ENCODE measurements at regions of chr7 and their contacts with region 1.

Region 1: DNA sequence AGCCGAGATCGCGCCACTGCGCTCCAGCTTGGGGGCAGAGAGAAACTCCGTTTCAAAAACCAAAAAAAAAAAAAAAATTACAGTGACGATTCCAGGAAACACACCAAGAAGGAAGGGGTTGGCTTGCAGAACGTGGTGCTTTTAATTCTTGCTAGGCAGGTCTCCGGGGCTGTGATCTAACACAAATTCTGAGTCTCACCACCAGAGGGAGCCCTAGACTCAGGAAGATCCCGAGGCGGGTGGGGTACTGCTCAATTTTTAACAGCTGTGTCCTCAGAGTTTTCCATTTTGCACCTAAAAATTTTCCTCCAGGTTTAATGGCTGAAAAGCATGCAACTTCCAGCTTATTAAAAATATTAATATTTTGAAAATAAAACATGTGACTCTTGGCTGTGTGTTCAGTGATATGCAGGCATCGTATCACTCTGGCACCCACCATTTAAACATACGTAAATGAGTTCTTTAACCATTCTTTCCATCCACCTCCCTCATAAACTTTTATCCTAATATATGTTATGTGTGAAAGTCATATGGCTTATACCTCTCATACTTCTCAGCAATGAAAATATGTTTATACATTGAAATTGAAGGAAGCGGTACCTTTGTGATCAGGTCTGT is 26.5 kb upstream of the NUB1 start:
- DNase-seq: peak; percentile 31
- ATAC-seq: peak; percentile 96
- H3K4me3 ChIP-seq: no peak overlapping the region
- H3K27ac ChIP-seq: no peak overlapping the region
- H3K4me1 ChIP-seq: no peaks in the 10 kb centered on the region
- H3K27me3 ChIP-seq: no peaks in the 10 kb centered on the region
- CTCF ChIP-seq: peak; percentile 73 to 87 (median 74)
- EP300 ChIP-seq: no peak
- POLR2A ChIP-seq: no peak
- RAD21 ChIP-seq: peak; percentile 93

Region 2: GRCh38 chr7:151304856-151305255 is 10.3 kb before region 1 on chr7:
- CTCF ChIA-PET with region 1: interaction called, 16 read pairs
- POLR2A ChIA-PET with region 1: no interaction called
- RAD21 ChIA-PET with region 1: no interaction called
- SMC1A ChIA-PET with region 1: interaction called, 5 read pairs
- in situ Hi-C with region 1: no loop called
- intact Hi-C with region 1: no loop called
- DNase-seq: no peak
- ATAC-seq: no peak
- H3K4me3 ChIP-seq: no peak overlapping the region
- H3K27ac ChIP-seq: no peak overlapping the region
- H3K4me1 ChIP-seq: peaks cover 3% of the 10 kb centered on the region
- H3K27me3 ChIP-seq: peaks cover 0 to 3% of the 10 kb centered on the region in 2 experiments; a peak in 2 of 4 replicates
- CTCF ChIP-seq: no peak
- EP300 ChIP-seq: no peak
- POLR2A ChIP-seq: no peak
- RAD21 ChIP-seq: no peak

Region 3: GRCh38 chr7:151336027-151336708 is 21.0 kb after region 1 on chr7:
- CTCF ChIA-PET with region 1: interaction called, 69 read pairs
- POLR2A ChIA-PET with region 1: interaction called, 8 read pairs
- RAD21 ChIA-PET with region 1: interaction called, 10 read pairs
- SMC1A ChIA-PET with region 1: interaction called, 27 read pairs
- in situ Hi-C with region 1: no loop called
- intact Hi-C with region 1: no loop called
- DNase-seq: no peak
- ATAC-seq: no peak
- H3K4me3 ChIP-seq: no peak overlapping the region
- H3K27ac ChIP-seq: peak overlapping the region; percentile 38
- H3K4me1 ChIP-seq: peaks cover 20% of the 10 kb centered on the region
- H3K27me3 ChIP-seq: no peaks in the 10 kb centered on the region
- CTCF ChIP-seq: no peak
- EP300 ChIP-seq: no peak
- POLR2A ChIP-seq: no peak
- RAD21 ChIP-seq: no peak

Region 4: DNA sequence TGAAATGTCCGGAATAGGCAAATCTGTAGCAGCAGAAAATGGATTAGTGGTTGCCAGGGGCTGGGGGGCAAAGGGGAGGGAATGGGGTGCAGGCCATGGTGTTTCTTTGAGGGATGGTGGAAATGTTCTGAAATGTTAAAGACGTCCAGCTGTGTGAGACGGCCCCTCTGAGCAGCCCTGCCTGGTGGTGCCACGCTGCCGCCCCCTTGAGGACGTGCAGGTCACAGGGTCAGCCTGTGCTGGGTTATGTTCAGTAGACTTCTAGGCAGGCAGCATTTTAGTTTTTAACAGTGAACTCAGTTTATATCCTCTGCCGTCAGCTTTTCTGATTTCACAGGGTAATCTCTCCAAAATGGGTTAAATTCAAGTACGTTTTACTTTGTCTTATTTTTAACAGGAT is 35.9 kb after region 1 on chr7:
- CTCF ChIA-PET with region 1: interaction called, 252 read pairs
- POLR2A ChIA-PET with region 1: interaction called, 11 read pairs
- RAD21 ChIA-PET with region 1: interaction called, 104 read pairs
- SMC1A ChIA-PET with region 1: interaction called, 152 read pairs
- in situ Hi-C with region 1: loop called (anchors 5 kb)
- intact Hi-C with region 1: loop called (anchors 1 kb)
- DNase-seq: no peak
- ATAC-seq: peak; percentile 76
- H3K4me3 ChIP-seq: peak overlapping the region; percentile 34; the same call in 1 of the 2 replicates
- H3K27ac ChIP-seq: peak overlapping the region; percentile 94
- H3K4me1 ChIP-seq: peaks cover 37% of the 10 kb centered on the region
- H3K27me3 ChIP-seq: no peaks in the 10 kb centered on the region
- CTCF ChIP-seq: peak; percentile 56 to 67 (median 59)
- EP300 ChIP-seq: no peak
- POLR2A ChIP-seq: no peak
- RAD21 ChIP-seq: peak; percentile 54

Region 5: DNA sequence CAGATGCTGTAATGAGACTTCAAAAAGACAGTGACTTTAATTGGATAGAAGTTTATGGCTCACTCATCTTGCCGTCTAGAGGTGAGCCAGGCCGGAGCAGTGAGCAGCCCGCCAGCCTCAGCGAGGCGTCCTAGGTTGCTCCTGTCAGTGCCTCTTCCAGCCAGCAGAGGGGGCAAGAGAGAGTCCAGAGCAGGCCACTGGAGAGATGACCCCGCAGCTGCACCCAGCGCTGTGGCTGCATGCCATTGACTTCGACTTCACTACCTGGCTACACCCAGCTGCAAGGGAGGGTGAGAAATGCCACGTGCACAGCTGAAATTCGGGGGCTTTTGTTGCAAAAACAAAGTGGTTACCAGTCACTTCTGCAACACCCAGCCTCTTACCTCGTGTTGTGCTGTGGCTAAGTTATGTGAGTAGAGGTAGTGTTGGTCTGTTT is 53.0 kb after region 1 on chr7:
- CTCF ChIA-PET with region 1: interaction called, 23 read pairs
- POLR2A ChIA-PET with region 1: no interaction called
- RAD21 ChIA-PET with region 1: no interaction called
- SMC1A ChIA-PET with region 1: interaction called, 11 read pairs
- in situ Hi-C with region 1: no loop called
- intact Hi-C with region 1: no loop called
- DNase-seq: no peak
- ATAC-seq: peak; percentile 100
- H3K4me3 ChIP-seq: no peak overlapping the region
- H3K27ac ChIP-seq: no peak overlapping the region
- H3K4me1 ChIP-seq: no peaks in the 10 kb centered on the region
- H3K27me3 ChIP-seq: no peaks in the 10 kb centered on the region
- CTCF ChIP-seq: peak; percentile 86 to 95 (median 88)
- EP300 ChIP-seq: no peak
- POLR2A ChIP-seq: no peak
- RAD21 ChIP-seq: peak; percentile 70

Region 6: DNA sequence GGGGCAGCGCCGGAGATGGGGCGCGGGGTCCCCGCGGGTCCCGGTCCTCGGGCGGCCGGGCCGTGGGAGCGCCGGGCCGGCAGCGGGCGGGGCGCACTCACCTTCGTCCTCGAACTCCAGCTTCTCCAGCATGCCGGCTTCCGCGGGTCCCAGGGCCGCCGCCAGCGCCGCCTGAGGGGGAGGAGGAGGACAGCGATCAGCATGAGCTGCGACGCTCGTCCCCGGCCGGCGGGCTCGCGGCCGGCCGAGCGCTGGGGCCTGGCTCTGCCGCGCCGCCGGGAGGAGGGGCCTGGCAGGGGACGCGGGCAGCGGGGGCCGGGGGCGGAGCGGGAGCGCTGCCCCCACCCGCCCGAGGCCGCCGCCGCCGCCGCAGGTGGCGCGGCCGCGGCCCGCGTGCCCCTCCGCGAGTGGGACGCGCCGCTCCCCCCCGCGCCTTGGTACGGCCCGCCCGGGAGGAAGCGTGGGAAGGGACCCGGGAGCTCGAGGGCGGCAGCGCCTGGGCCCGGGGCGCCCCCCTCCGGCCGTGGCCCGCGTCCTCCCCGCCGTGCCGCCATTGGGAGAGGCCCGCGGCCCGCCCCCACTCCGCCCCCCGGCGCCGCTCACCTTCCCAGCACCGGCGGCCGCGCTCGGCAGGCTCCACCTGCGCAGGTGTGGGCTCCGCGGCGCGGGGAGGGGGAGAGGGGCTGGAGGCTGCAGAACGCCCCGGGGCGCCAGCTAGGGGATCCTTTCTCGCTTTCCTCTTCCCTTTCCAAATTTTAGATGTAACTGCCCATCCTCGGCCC is 317.0 kb after region 1 on chr7:
- CTCF ChIA-PET with region 1: interaction called, 25 read pairs
- POLR2A ChIA-PET with region 1: no interaction called
- RAD21 ChIA-PET with region 1: interaction called, 11 read pairs
- SMC1A ChIA-PET with region 1: interaction called, 3 read pairs
- in situ Hi-C with region 1: no loop called
- intact Hi-C with region 1: no loop called
- DNase-seq: peak; percentile 24
- ATAC-seq: peak; percentile 85
- H3K4me3 ChIP-seq: peak overlapping the region; percentile 87
- H3K27ac ChIP-seq: peak overlapping the region; percentile 90
- H3K4me1 ChIP-seq: peaks cover 9% of the 10 kb centered on the region
- H3K27me3 ChIP-seq: no peaks in the 10 kb centered on the region; a peak in 1 of 4 replicates
- CTCF ChIP-seq: peak; percentile 21 to 67 (median 30); a peak in 4 of 6 replicates
- EP300 ChIP-seq: no peak
- POLR2A ChIP-seq: peak; percentile 78
- RAD21 ChIP-seq: peak; percentile 37; the same call in 1 of the 2 replicates

Measured in GM12878 (cell line).